GM23248 (cell line): ENCODE measurements at regions of chr21 and their contacts with region 1.

Region 1: GRCh38 chr21:29849735-29850176 is 90.0 kb downstream of the GRIK1 start:
- DNase-seq: peak; percentile 76
- H3K4me3 ChIP-seq: no peak overlapping the region
- H3K27ac ChIP-seq: no peak overlapping the region
- H3K4me1 ChIP-seq: no peaks in the 10 kb centered on the region
- H3K27me3 ChIP-seq: no peaks in the 10 kb centered on the region

Region 2: GRCh38 chr21:29080454-29080941 is 769.3 kb before region 1 on chr21:
- in situ Hi-C with region 1: loop called (anchors 10 kb)
- DNase-seq: no peak
- H3K4me3 ChIP-seq: no peak overlapping the region
- H3K27ac ChIP-seq: no peak overlapping the region
- H3K4me1 ChIP-seq: no peaks in the 10 kb centered on the region; the same call in 1 of the 2 replicates
- H3K27me3 ChIP-seq: no peaks in the 10 kb centered on the region

Region 3: GRCh38 chr21:29499734-29500343 is 349.9 kb before region 1 on chr21:
- in situ Hi-C with region 1: loop called (anchors 25 kb)
- DNase-seq: peak; percentile 55
- H3K4me3 ChIP-seq: no peak overlapping the region
- H3K27ac ChIP-seq: no peak overlapping the region
- H3K4me1 ChIP-seq: peaks cover 20% of the 10 kb centered on the region
- H3K27me3 ChIP-seq: no peaks in the 10 kb centered on the region

Region 4: GRCh38 chr21:30189773-30190172 is 340.0 kb after region 1 on chr21:
- in situ Hi-C with region 1: no loop called
- DNase-seq: no peak
- H3K4me3 ChIP-seq: no peak overlapping the region
- H3K27ac ChIP-seq: no peak overlapping the region
- H3K4me1 ChIP-seq: no peaks in the 10 kb centered on the region
- H3K27me3 ChIP-seq: no peaks in the 10 kb centered on the region